Sigmoid colon (tissue), 7 donors: ENCODE measurements at regions of chr1 and their contacts with region 1.

Region 1: GRCh38 chr1:151611832-151612500 is at the start of gene SNX27:
- DNase-seq: peak; percentile 97
- H3K4me3 ChIP-seq: peak within 1 kb of the TSS; percentile 88 to 100 (median 92)
- H3K27ac ChIP-seq: peak within 1 kb of the TSS; percentile 97 to 99 (median 98)
- H3K4me1 ChIP-seq: peaks cover 0 to 53% (median 43%) of the 10 kb centered on the region in 4 donors
- H3K27me3 ChIP-seq: no peaks in the 10 kb centered on the region
- CTCF ChIP-seq: no peak
- EP300 ChIP-seq: no peak
- POLR2A ChIP-seq: peak; percentile 5 to 33
- total RNA-seq, gene SNX27: 49.0 to 59.0 (median 54.1) TPM

Region 2: DNA sequence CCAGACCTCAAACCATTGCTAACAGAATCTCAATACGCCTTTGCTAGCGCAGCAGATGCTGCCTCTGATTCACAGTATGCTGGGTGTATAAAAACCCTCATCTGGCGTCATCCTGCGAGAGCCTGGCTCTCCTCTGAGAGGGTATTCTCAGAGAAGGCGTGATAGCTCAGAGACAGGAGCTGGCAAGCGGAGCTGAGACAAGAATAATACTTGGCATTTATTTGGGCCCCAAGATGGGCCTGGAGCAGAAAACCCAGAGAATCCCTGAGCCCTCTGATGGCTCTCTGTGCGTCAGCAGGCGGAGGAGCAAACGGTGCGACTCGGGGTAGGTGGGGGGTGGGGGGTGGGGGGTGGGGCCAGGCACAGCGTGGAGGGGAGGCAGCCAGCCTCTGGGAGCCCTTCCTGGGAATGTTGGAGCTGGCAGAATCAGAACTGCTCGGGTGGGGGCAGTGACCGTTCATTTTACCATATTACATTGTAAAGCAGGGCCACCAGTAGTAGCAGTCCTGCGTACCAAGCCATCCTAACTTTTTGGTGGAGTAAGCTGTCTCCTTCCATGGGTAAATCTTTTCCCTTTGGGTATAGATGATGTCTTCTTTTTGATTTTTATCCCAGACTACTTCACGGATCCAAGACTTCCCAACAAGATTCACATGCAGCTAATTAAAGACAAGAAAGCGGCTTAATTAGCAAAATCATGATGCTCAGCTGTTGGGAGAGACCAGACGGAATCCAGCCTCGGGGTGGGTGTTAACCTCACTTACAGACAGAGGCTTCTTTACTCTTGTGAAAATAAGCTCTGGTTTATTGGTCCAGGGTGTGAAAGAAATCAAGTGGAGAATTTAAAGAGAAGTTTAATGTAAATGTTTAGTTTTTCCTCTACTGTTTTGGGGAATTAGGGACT is 116.4 kb after region 1 on chr1:
- intact Hi-C with region 1: loop called (anchors 5 kb)
- DNase-seq: peak; percentile 84
- H3K4me3 ChIP-seq: peak overlapping the region in 3 of 4 donors; percentile 1 to 32 (median 24)
- H3K27ac ChIP-seq: peak overlapping the region; percentile 65 to 85 (median 78)
- H3K4me1 ChIP-seq: peaks cover 0 to 14% (median 7%) of the 10 kb centered on the region in 4 donors
- H3K27me3 ChIP-seq: no peaks in the 10 kb centered on the region
- CTCF ChIP-seq: no peak
- EP300 ChIP-seq: peak in 1 of 4 donors; percentile 8
- POLR2A ChIP-seq: no peak